ENCODE measurements at regions of chr11 and their contacts with region 1.

Region 1: GRCh38 chr11:19679952-19680828 is 32.4 kb upstream of the NAV2 start:
- DNase-seq: peak; percentile 99
- ATAC-seq: peak; percentile 90
- H3K4me3 ChIP-seq: no peak overlapping the region
- H3K27ac ChIP-seq: peak overlapping the region; percentile 92
- H3K4me1 ChIP-seq: peaks cover 26% of the 10 kb centered on the region
- H3K27me3 ChIP-seq: no peaks in the 10 kb centered on the region
- CTCF ChIP-seq: 0 out of 2 replicates have a peak, but pooled peaks have one; percentile 12
- POLR2A ChIP-seq: no peak
- RAD21 ChIP-seq: peak; percentile 30; the same call in 1 of the 2 replicates

Region 2: GRCh38 chr11:19712281-19713220 is 32.4 kb after region 1 on chr11 and contains the start of gene NAV2:
- CTCF ChIA-PET with region 1: no interaction called
- POLR2A ChIA-PET with region 1: no interaction called
- dilution Hi-C with region 1: no loop called
- in situ Hi-C with region 1: no loop called
- intact Hi-C with region 1: loop called (anchors 1 kb)
- DNase-seq: peak; percentile 91
- ATAC-seq: peak; percentile 91
- H3K4me3 ChIP-seq: peak within 1 kb of the TSS; percentile 63
- H3K27ac ChIP-seq: peak within 1 kb of the TSS; percentile 84
- H3K4me1 ChIP-seq: peaks cover 25% of the 10 kb centered on the region
- H3K27me3 ChIP-seq: no peaks in the 10 kb centered on the region
- CTCF ChIP-seq: 0 out of 2 replicates have a peak, but pooled peaks have one; percentile 1
- POLR2A ChIP-seq: peak; percentile 95
- RAD21 ChIP-seq: peak; percentile 25; the same call in 1 of the 2 replicates
- total RNA-seq, gene NAV2: 4.5 and 4.7 TPM in 2 replicates

Region 3: DNA sequence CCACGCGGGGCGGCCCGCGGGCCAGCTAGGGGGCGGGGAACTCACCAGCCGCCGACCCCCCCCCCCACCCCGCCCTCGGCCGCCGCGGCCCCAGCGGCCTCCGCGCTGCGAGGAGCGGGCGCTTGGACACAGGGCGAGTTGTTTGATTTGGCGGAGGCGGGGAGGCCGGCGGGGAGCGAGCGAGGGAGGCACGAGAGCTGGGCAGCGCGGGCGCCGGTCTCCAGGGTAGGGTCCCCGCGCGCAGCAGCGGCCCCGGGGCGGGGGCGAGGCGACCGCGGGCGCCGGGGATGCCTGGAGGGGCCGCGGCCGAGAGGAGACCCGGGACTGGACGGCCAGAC is 96.8 kb after region 1 on chr11:
- CTCF ChIA-PET with region 1: no interaction called
- POLR2A ChIA-PET with region 1: no interaction called
- dilution Hi-C with region 1: no loop called
- in situ Hi-C with region 1: no loop called
- intact Hi-C with region 1: no loop called
- DNase-seq: no peak
- ATAC-seq: peak; percentile 71
- H3K4me3 ChIP-seq: peak overlapping the region; percentile 41
- H3K27ac ChIP-seq: no peak overlapping the region
- H3K4me1 ChIP-seq: peaks cover 2% of the 10 kb centered on the region; the same call in 1 of the 2 replicates
- H3K27me3 ChIP-seq: peaks cover 3% of the 10 kb centered on the region; the same call in 1 of the 2 replicates
- CTCF ChIP-seq: no peak
- POLR2A ChIP-seq: no peak
- RAD21 ChIP-seq: no peak

Region 4: DNA sequence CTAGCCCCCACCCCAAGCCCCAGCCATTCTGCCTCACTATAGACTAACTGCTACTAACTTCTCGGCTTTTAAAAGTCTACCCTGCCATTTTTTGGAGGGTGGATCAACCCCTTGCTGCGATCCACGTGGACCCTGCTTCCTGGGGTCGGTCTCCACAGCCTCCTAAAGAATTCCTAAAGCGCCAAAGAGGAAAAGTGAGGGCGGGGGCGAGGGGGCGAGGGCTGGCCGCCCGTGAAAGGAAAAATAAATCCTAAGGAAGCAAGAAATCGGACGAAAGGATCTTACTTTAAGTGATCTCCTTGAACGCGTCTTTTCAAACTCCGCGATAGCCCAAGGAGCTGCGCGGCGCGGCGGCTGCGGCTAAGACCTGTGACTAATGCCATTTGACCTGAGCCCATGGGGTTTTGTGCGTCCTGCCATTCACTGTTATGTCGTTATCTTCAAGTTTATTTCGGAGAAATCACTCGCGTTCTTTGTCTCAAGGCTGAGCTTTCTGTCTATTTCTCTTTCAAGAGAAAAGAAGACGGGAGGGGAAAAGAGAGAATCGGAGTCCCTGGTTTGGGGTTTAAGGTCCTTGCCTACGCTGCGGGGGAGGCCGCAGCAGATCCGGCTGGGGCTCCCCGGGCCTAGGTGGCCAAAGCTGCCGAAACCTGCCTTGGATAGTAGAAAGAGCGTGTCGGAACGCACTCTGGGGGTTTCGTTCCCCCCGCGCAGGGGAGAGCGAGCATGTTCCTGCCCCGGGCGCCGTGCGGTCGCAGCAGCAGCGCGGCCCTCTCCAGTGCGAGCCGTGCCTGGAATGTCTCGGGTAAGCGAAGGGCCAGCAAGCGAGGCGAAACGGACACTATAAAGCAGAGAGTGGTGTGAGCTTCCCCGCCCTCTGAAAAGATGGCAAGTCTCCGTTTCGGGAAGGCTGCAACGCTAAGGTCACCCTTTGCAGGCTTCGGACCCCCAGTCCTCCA is 482.9 kb after region 1 on chr11:
- CTCF ChIA-PET with region 1: no interaction called
- POLR2A ChIA-PET with region 1: no interaction called
- dilution Hi-C with region 1: no loop called
- in situ Hi-C with region 1: no loop called
- intact Hi-C with region 1: no loop called
- DNase-seq: peak; percentile 18
- ATAC-seq: peak; percentile 76
- H3K4me3 ChIP-seq: no peak overlapping the region; the same call in 1 of the 2 replicates
- H3K27ac ChIP-seq: no peak overlapping the region
- H3K4me1 ChIP-seq: no peaks in the 10 kb centered on the region
- H3K27me3 ChIP-seq: peaks cover 80% of the 10 kb centered on the region
- CTCF ChIP-seq: no peak
- POLR2A ChIP-seq: no peak
- RAD21 ChIP-seq: no peak